ENCODE measurements at regions of chr16 and their contacts with region 1.

Region 1: GRCh38 chr16:15672514-15673167 is 22.6 kb downstream of the NDE1 start:
- DNase-seq: peak; percentile 96
- H3K4me3 Mint-ChIP-seq: peak overlapping the region; percentile 66
- H3K27ac Mint-ChIP-seq: peak overlapping the region; percentile 90
- H3K4me1 Mint-ChIP-seq: peaks cover 47% of the 10 kb centered on the region
- H3K27me3 Mint-ChIP-seq: no peaks in the 10 kb centered on the region

Region 2: DNA sequence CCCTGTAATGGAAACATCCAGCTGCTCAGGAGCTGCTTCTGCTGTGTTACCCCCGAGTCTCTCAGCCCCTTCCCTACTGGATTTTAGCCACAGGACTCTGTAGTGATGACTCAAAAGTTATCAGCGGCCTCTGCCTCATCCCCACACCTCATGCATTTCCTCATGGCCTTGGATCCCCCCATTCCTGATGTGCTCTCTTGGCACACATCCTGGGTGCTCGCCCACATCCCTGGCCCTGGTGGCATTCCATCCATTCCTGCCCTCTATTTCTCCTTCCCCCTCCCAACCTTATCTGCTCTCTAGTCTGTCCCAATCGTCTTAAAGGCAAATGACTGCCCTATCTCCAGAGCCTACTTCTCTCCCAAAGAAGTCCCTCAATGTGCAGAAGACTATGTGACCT is 54.2 kb before region 1 on chr16:
- intact Hi-C with region 1: no loop called
- DNase-seq: no peak
- H3K4me3 Mint-ChIP-seq: no peak overlapping the region
- H3K27ac Mint-ChIP-seq: peak overlapping the region; percentile 14
- H3K4me1 Mint-ChIP-seq: peaks cover 3% of the 10 kb centered on the region
- H3K27me3 Mint-ChIP-seq: no peaks in the 10 kb centered on the region

Region 3: GRCh38 chr16:15650019-15650697 is 22.5 kb before region 1 on chr16 and contains the start of gene NDE1:
- intact Hi-C with region 1: loop called (anchors 2 kb)
- DNase-seq: peak; percentile 96
- H3K4me3 Mint-ChIP-seq: peak within 1 kb of the TSS; percentile 100
- H3K27ac Mint-ChIP-seq: peak within 1 kb of the TSS; percentile 100
- H3K4me1 Mint-ChIP-seq: peaks cover 22% of the 10 kb centered on the region
- H3K27me3 Mint-ChIP-seq: no peaks in the 10 kb centered on the region
- total RNA-seq, gene NDE1: 85.4 and 85.8 TPM in 2 replicates